Endothelial cell of umbilical vein (primary cell): ENCODE measurements at regions of chr5 and their contacts with region 1.

Region 1: DNA sequence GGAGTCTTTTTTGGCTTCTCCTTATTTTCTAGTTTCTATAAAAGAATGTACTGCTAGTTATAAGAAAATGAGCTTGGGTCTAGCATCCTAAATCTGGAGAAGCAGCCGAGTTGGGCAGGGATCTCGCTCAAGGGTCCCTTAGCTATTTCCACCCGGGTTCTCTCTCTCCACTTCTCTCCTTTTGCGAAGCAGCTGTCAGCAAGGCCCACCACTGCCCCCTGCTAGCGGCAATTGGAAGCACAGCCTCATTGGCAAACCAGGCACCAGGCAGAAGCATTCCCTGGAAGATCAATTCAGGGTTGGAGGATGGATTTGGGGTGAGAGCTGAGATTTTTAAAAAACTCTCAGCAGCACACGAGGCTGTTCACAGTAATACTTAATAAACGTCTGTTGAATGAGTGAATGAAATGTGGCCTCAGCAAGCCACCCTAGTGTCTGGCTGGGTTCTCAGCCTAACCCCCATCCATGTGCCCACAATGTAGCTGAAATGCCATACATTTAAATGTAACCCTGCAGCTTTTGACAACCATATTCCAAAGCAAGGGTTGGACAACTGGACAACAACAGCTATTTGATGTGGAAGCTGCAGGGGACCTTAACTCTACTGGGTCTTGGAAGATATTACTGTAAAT is 34.6 kb upstream of the TNIP1 start:
- DNase-seq: peak; percentile 64
- H3K4me3 ChIP-seq: no peak overlapping the region
- H3K27ac ChIP-seq: no peak overlapping the region
- H3K4me1 ChIP-seq: no peaks in the 10 kb centered on the region
- H3K27me3 ChIP-seq: no peaks in the 10 kb centered on the region
- CTCF ChIP-seq: peak; percentile 93 to 94
- POLR2A ChIP-seq: no peak

Region 2: DNA sequence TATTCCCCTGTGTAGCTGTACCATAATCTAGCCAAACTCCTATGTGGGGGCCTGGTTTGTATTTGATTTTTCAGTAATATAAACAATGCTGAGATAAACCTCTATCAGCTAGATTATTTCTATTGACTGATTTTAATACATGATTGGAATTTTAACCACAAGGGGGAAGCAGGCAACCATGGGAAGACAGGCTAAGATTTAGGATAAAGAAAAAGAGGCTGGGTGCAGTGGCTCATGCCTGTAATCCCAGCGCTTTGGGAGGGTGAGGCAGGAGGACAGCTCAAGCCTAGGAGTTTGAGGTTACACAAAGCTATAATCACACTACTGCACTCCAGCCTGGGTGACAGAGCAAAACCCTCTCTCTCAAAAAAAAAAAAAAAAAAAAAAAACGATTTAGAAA is 113.1 kb before region 1 on chr5:
- CTCF ChIA-PET with region 1: interaction called, 215 read pairs
- POLR2A ChIA-PET with region 1: no interaction called
- dilution Hi-C with region 1: no loop called
- intact Hi-C with region 1: loop called (anchors 1 kb)
- DNase-seq: peak; percentile 55
- H3K4me3 ChIP-seq: no peak overlapping the region
- H3K27ac ChIP-seq: no peak overlapping the region
- H3K4me1 ChIP-seq: no peaks in the 10 kb centered on the region
- H3K27me3 ChIP-seq: peaks cover 0 to 4% of the 10 kb centered on the region in 2 experiments
- CTCF ChIP-seq: peak in 1 of 2 donors; percentile 36
- POLR2A ChIP-seq: no peak

Region 3: GRCh38 chr5:151063142-151063949 is 52.0 kb before region 1 on chr5:
- CTCF ChIA-PET with region 1: interaction called, 45 read pairs
- POLR2A ChIA-PET with region 1: no interaction called
- dilution Hi-C with region 1: no loop called
- intact Hi-C with region 1: no loop called
- DNase-seq: peak; percentile 83
- H3K4me3 ChIP-seq: no peak overlapping the region
- H3K27ac ChIP-seq: peak overlapping the region; percentile 86
- H3K4me1 ChIP-seq: peaks cover 27% of the 10 kb centered on the region
- H3K27me3 ChIP-seq: no peaks in the 10 kb centered on the region
- CTCF ChIP-seq: no peak
- POLR2A ChIP-seq: no peak

Region 4: GRCh38 chr5:151086905-151087360 is 28.5 kb before region 1 on chr5:
- CTCF ChIA-PET with region 1: interaction called, 22 read pairs
- POLR2A ChIA-PET with region 1: interaction called, 3 read pairs
- dilution Hi-C with region 1: no loop called
- intact Hi-C with region 1: no loop called
- DNase-seq: no peak
- H3K4me3 ChIP-seq: no peak overlapping the region
- H3K27ac ChIP-seq: no peak overlapping the region
- H3K4me1 ChIP-seq: peaks cover 26% of the 10 kb centered on the region
- H3K27me3 ChIP-seq: no peaks in the 10 kb centered on the region
- CTCF ChIP-seq: no peak
- POLR2A ChIP-seq: no peak

Region 5: DNA sequence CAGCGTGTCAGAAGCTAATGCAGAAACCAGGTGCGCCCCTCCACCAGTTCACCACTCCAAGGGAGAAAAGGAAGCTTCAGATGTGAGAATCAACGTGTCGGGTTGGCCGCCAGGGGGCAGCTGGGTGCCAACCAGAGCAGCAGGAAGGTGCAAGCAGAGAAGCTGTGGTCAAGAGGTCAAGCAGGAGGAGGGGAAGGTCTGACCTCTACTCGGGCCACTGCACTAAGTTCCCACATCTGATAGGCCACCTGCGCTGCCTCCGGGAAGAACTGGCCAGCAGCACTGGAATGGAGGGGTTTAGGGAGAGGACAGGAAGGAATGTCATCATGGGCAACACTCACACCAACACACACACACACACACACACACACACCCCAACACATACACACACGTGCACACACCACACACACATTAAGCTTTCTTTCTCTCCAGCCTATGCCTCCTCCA is 10.8 kb after region 1 on chr5:
- CTCF ChIA-PET with region 1: interaction called, 52 read pairs
- POLR2A ChIA-PET with region 1: no interaction called
- dilution Hi-C with region 1: no loop called
- intact Hi-C with region 1: no loop called
- DNase-seq: peak; percentile 57
- H3K4me3 ChIP-seq: no peak overlapping the region
- H3K27ac ChIP-seq: no peak overlapping the region
- H3K4me1 ChIP-seq: no peaks in the 10 kb centered on the region
- H3K27me3 ChIP-seq: no peaks in the 10 kb centered on the region
- CTCF ChIP-seq: peak; percentile 69 to 86
- POLR2A ChIP-seq: no peak

Region 6: DNA sequence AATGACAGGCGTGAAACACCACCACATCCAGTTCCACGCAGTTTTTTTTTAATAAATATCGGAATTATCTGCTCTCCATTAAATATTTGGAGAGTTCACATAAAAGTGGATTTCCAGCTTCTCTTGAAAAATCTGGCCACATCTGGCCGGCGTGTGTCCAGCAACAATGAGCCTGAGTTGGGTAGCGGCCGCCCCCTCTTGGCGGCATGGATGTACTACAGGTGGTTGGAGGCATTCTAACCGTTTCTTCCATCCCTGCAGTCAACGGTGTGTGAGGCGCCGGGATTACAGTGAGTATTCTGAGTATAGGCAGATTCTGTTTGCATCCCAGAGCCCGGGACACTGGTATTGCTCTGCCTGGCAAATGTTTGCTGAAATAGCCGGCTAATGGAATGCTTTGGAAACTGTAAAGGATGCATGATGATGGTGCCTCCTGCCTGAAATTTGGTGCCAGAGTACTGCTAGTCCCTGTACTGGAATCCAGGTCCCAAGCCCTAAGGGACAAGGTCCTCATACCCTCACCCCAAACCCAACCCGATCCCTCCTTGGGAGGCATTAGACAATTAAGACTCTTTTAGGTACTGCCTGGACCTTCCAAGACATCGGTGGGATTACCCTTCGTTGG is 124.0 kb after region 1 on chr5:
- CTCF ChIA-PET with region 1: interaction called, 19 read pairs
- POLR2A ChIA-PET with region 1: no interaction called
- dilution Hi-C with region 1: no loop called
- intact Hi-C with region 1: no loop called
- DNase-seq: peak; percentile 67
- H3K4me3 ChIP-seq: no peak overlapping the region
- H3K27ac ChIP-seq: no peak overlapping the region
- H3K4me1 ChIP-seq: no peaks in the 10 kb centered on the region
- H3K27me3 ChIP-seq: no peaks in the 10 kb centered on the region
- CTCF ChIP-seq: peak; percentile 73 to 88
- POLR2A ChIP-seq: no peak